Ascending aorta (tissue), 2 donors: ENCODE measurements at regions of chr12 and their contacts with region 1.

Region 1: DNA sequence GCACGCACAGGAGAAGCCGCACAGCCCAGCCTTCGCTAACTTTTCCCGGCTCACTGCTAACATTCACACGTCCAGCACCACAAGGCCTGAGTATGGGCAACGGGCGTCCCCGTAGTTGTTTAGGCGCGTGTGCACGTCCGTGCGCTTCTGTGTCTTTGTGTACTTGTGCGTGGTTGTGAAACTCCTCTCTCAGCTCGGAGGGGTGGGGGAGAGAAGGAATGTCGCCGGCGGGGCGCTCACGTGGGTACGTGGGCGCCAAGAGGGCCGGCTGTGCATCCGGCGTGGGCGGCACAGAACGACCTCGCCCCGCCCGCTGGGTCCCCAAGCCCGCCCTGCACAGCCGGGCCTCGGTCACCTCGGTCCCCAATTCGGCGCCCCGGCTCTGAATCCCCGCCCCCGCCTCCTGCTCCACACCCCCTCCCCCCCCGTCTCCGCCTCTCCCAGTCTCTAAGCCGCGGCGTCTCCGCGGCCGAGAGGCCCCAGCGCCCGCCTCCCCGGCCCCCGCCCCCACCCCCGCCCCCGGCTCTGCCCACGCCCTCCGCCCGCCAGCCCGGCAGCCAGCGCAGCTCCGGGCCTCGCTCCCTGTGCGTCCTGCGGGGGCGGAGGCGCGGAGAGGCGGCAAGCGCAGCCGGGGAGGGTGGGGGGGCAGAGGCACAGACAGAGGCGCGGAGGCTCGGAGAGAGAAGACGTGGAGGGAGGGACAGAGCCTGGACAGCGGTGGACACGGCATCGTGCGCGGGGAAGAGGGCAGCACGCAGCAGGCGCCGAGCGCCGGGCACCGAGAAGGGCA is at the start of gene NAB2:
- DNase-seq: peak; percentile 88 to 98
- H3K4me3 ChIP-seq: peak within 1 kb of the TSS; percentile 95 to 96
- H3K27ac ChIP-seq: peak within 1 kb of the TSS; percentile 99 to 100
- H3K4me1 ChIP-seq: peaks cover 26 to 50% of the 10 kb centered on the region in 2 donors
- H3K27me3 ChIP-seq: no peaks in the 10 kb centered on the region
- CTCF ChIP-seq: no peak
- total RNA-seq, gene NAB2: 50.9 TPM

Region 2: GRCh38 chr12:56127888-56128669 is 960.6 kb before region 1 on chr12 and contains the start of gene ESYT1:
- intact Hi-C with region 1: loop called (anchors 5 kb)
- DNase-seq: peak; percentile 99 to 100
- H3K4me3 ChIP-seq: peak within 1 kb of the TSS; percentile 73 to 80
- H3K27ac ChIP-seq: peak within 1 kb of the TSS; percentile 87 to 88
- H3K4me1 ChIP-seq: peaks cover 9 to 21% of the 10 kb centered on the region in 2 donors
- H3K27me3 ChIP-seq: no peaks in the 10 kb centered on the region
- CTCF ChIP-seq: no peak
- total RNA-seq, gene ESYT1: 119 TPM

Region 3: GRCh38 chr12:56636675-56637540 is 451.7 kb before region 1 on chr12:
- intact Hi-C with region 1: loop called (anchors 5 kb)
- DNase-seq: peak; percentile 99 to 100
- H3K4me3 ChIP-seq: peak overlapping the region; percentile 78 to 93
- H3K27ac ChIP-seq: peak overlapping the region; percentile 82 to 95
- H3K4me1 ChIP-seq: peaks cover 11 to 30% of the 10 kb centered on the region in 2 donors
- H3K27me3 ChIP-seq: no peaks in the 10 kb centered on the region
- CTCF ChIP-seq: peak; percentile 30 to 68 (median 53)

Region 4: DNA sequence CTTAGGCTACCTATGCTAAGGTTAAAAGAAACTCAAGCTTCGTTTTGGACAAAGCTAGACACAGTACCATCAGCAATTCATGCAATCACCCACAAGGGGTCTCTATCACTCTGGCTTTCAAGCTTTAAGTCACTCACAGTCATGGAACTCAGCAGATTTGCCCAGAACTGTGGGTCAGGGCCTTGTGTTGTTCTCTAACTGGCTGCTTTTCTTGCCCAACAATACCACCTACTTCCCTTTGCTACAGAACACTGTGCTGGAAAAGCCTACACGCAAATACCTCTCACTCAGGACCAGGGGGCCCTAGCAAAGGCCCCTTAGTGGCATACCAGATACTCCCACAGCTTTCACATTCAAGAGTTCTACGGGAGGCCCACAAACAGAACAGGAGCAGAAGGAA is 19.1 kb before region 1 on chr12:
- intact Hi-C with region 1: loop called (anchors 2 kb)
- DNase-seq: peak; percentile 55 to 91
- H3K4me3 ChIP-seq: no peak overlapping the region
- H3K27ac ChIP-seq: peak overlapping the region; percentile 81 to 85
- H3K4me1 ChIP-seq: peaks cover 0 to 13% of the 10 kb centered on the region in 2 donors
- H3K27me3 ChIP-seq: no peaks in the 10 kb centered on the region
- CTCF ChIP-seq: peak; percentile 84 to 93 (median 86)

Region 5: GRCh38 chr12:57111031-57111734 is 22.5 kb after region 1 on chr12 and contains the start of gene STAT6:
- intact Hi-C with region 1: loop called (anchors 1 kb)
- DNase-seq: peak; percentile 80 to 92
- H3K4me3 ChIP-seq: peak within 1 kb of the TSS; percentile 76 to 90
- H3K27ac ChIP-seq: peak within 1 kb of the TSS; percentile 96 to 98
- H3K4me1 ChIP-seq: peaks cover 4 to 17% of the 10 kb centered on the region in 2 donors
- H3K27me3 ChIP-seq: no peaks in the 10 kb centered on the region
- CTCF ChIP-seq: no peak
- total RNA-seq, gene STAT6: 188 TPM

Region 6: DNA sequence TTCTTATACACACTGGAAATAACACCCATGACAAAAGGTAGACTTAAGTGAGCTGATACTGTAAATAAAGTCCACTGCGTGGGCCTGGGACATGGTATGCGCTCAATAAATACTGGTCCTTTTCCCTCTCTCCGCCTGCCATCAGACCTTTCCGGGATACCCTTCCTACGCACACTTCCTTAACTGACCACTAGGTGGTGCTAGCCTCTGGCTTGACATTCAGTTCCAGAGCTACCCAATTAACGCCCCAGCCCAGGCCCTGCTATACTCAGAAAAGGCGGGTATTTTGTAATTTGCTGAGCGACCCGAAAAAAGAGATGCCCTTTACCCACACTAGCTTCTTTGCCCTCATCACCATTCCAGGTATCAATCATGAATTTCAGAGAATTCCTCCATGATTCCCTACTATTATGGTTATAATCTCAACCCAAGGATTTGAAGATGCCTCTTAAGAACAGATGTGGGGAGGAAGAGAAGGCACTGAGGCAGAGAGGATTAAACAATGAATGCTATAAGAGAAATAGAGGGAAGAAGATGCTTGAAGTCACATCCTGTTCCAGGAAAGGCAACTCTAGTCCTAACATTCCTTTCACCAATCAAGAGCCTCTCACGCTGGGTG is 35.7 kb after region 1 on chr12:
- intact Hi-C with region 1: loop called (anchors 5 kb)
- DNase-seq: peak in 1 of 2 donors; percentile 88
- H3K4me3 ChIP-seq: no peak overlapping the region
- H3K27ac ChIP-seq: no peak overlapping the region
- H3K4me1 ChIP-seq: peaks cover 3 to 10% of the 10 kb centered on the region in 2 donors
- H3K27me3 ChIP-seq: no peaks in the 10 kb centered on the region
- CTCF ChIP-seq: peak; percentile 92 to 96 (median 92)

Region 7: GRCh38 chr12:57520053-57520871 is 431.6 kb after region 1 on chr12 and contains the start of gene DDIT3:
- intact Hi-C with region 1: loop called (anchors 5 kb)
- DNase-seq: peak; percentile 98 to 100
- H3K4me3 ChIP-seq: peak within 1 kb of the TSS; percentile 73 to 91
- H3K27ac ChIP-seq: peak within 1 kb of the TSS; percentile 98 to 99
- H3K4me1 ChIP-seq: peaks cover 29 to 52% of the 10 kb centered on the region in 2 donors
- H3K27me3 ChIP-seq: no peaks in the 10 kb centered on the region
- CTCF ChIP-seq: no peak
- total RNA-seq, gene DDIT3: 0.64 TPM